ENCODE measurements at regions of chr5 and their contacts with region 1.

Region 1: GRCh38 chr5:139837631-139838422 is 42.2 kb downstream of the PSD2 start:
- DNase-seq: no peak
- ATAC-seq: no peak
- H3K4me3 ChIP-seq: no peak overlapping the region
- H3K27ac ChIP-seq: no peak overlapping the region
- H3K4me1 ChIP-seq: no peaks in the 10 kb centered on the region
- H3K27me3 ChIP-seq: peaks cover 0 to 5% (median 0%) of the 10 kb centered on the region in 9 donors
- CTCF ChIP-seq: no peak
- POLR2A ChIP-seq: no peak

Region 2: GRCh38 chr5:139745800-139746690 is 91.8 kb before region 1 on chr5:
- intact Hi-C with region 1: no loop called
- DNase-seq: peak; percentile 69 to 72 (median 72)
- ATAC-seq: peak; percentile 53 to 81 (median 73)
- H3K4me3 ChIP-seq: peak overlapping the region; percentile 9 to 58 (median 50)
- H3K27ac ChIP-seq: peak overlapping the region in 3 of 12 donors; percentile 18 to 58 (median 38)
- H3K4me1 ChIP-seq: peaks cover 16 to 36% (median 32%) of the 10 kb centered on the region in 12 donors
- H3K27me3 ChIP-seq: peaks cover 0 to 42% (median 25%) of the 10 kb centered on the region in 9 donors
- CTCF ChIP-seq: no peak
- POLR2A ChIP-seq: no peak

Region 3: GRCh38 chr5:139803978-139804377 is 33.8 kb before region 1 on chr5:
- intact Hi-C with region 1: loop called in 1 of 10 experiments (anchors 2 kb)
- DNase-seq: no peak
- ATAC-seq: no peak
- H3K4me3 ChIP-seq: no peak overlapping the region
- H3K27ac ChIP-seq: no peak overlapping the region
- H3K4me1 ChIP-seq: no peaks in the 10 kb centered on the region
- H3K27me3 ChIP-seq: peaks cover 0 to 43% (median 7%) of the 10 kb centered on the region in 9 donors
- CTCF ChIP-seq: no peak
- POLR2A ChIP-seq: no peak

Measured in heart left ventricle (tissue), 16 donors.